Activated CD4-positive, alpha-beta T cell treated with anti-CD3 and anti-CD28 coated beads, Interleukin-2, amount 10 ng/mL, durations not matched to agents 7 days and 5 days (primary cell): ENCODE measurements at regions of chr11 and their contacts with region 1.

Region 1: DNA sequence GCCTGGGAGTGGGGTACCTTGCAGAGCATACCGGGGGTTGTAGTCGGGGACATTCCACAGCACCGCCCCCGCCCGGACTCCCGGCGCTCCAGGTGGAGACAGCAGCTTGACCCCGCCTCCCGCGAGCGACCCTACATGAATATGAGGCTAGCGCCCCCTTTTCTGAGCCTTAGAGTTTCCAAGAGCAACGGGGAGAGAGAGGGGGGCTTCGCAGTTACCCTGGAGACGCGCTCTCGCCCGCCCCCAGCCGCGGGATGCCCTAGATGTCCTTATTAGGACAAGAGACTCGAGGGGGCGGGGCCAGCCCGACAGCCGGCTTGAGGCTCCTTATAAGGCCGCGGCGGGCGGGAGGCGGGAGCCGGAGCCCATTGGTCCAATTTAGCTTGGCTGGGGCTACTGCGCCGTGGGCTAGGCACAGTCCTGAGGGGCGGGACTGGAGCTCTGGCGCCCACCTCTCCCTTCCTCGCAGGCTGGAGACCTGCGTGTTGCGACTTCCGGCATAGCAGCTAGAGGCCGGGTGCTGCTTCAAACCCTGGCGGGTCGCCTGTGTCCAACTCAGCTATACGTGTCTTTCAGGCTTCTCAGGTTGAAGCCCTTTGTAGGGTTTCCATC is 927 bp upstream of the MUS81 start:
- DNase-seq: peak; percentile 99
- H3K4me3 Mint-ChIP-seq: peak overlapping the region; percentile 97
- H3K27ac Mint-ChIP-seq: peak overlapping the region; percentile 99
- H3K4me1 Mint-ChIP-seq: peaks cover 54% of the 10 kb centered on the region
- H3K27me3 Mint-ChIP-seq: no peaks in the 10 kb centered on the region

Region 2: GRCh38 chr11:65844231-65845190 is 14.8 kb before region 1 on chr11:
- CTCF ChIA-PET with region 1: interaction called, 50 read pairs
- POLR2A ChIA-PET with region 1: interaction called, 3 read pairs
- DNase-seq: no peak
- H3K4me3 Mint-ChIP-seq: no peak overlapping the region
- H3K27ac Mint-ChIP-seq: no peak overlapping the region
- H3K4me1 Mint-ChIP-seq: no peaks in the 10 kb centered on the region
- H3K27me3 Mint-ChIP-seq: no peaks in the 10 kb centered on the region

Region 3: GRCh38 chr11:65873318-65874156 is 14.2 kb after region 1 on chr11:
- CTCF ChIA-PET with region 1: interaction called, 590 read pairs
- POLR2A ChIA-PET with region 1: interaction called, 3 read pairs
- DNase-seq: peak; percentile 95
- H3K4me3 Mint-ChIP-seq: peak overlapping the region; percentile 81
- H3K27ac Mint-ChIP-seq: peak overlapping the region; percentile 89
- H3K4me1 Mint-ChIP-seq: peaks cover 40% of the 10 kb centered on the region
- H3K27me3 Mint-ChIP-seq: no peaks in the 10 kb centered on the region